ENCODE measurements at regions of chr7 and their contacts with region 1.

Region 1: GRCh38 chr7:95794917-95795515 is 22.7 kb downstream of the DYNC1I1 start:
- DNase-seq: peak; percentile 62
- ATAC-seq: peak; percentile 74
- H3K4me3 ChIP-seq: no peak overlapping the region
- H3K27ac ChIP-seq: no peak overlapping the region
- H3K4me1 ChIP-seq: no peaks in the 10 kb centered on the region
- H3K27me3 ChIP-seq: no peaks in the 10 kb centered on the region
- CTCF ChIP-seq: peak; percentile 76

Region 2: DNA sequence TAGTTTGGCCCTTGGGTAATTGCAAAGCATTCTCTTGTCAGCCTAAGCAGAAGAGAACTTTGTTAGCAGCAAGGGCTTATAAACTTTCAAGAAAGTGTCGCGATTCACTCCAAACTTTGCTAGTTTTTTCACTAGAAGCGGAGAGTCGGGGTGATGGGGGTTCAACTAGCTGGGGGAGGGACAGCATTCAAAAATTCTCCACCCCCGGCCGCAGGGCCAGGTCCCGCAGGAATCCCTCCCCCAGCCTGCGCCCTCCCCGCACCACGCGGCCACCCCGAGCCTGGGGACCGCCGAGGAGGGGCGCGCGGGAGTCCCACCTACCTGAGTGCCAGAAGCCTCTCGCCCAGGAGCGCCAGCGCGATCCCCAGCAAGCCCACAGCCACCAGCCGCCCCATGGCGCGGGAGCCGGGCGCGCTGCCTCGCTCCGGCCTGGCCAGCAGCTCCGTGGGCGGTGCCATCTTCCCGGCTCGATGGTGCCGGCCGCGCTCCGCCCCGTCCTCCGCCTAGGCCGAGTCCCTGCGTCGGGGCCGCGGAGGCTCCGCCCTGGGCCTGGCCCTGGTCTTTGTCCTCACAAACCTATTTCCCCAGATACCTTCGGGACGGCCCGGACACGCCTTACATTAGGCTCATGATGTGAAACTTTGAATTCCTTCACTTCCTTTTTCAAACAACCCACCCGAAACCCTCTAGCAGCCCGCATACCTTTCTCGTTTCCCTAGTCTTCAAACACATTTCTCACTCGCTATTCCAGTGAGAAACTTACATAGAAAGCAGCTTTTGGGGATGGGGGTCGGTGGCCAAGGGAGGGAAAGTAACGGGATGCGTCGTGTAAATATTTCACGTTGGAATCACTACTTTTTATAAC is 360.2 kb before region 1 on chr7 and contains the start of gene PON2:
- CTCF ChIA-PET with region 1: no interaction called
- POLR2A ChIA-PET with region 1: no interaction called
- intact Hi-C with region 1: no loop called
- DNase-seq: peak; percentile 85
- ATAC-seq: peak; percentile 99
- H3K4me3 ChIP-seq: peak within 1 kb of the TSS; percentile 90
- H3K27ac ChIP-seq: peak within 1 kb of the TSS; percentile 79
- H3K4me1 ChIP-seq: peaks cover 23% of the 10 kb centered on the region
- H3K27me3 ChIP-seq: no peaks in the 10 kb centered on the region
- CTCF ChIP-seq: no peak
- total RNA-seq, gene PON2: 51.6 and 56.4 TPM in 2 replicates

Region 3: DNA sequence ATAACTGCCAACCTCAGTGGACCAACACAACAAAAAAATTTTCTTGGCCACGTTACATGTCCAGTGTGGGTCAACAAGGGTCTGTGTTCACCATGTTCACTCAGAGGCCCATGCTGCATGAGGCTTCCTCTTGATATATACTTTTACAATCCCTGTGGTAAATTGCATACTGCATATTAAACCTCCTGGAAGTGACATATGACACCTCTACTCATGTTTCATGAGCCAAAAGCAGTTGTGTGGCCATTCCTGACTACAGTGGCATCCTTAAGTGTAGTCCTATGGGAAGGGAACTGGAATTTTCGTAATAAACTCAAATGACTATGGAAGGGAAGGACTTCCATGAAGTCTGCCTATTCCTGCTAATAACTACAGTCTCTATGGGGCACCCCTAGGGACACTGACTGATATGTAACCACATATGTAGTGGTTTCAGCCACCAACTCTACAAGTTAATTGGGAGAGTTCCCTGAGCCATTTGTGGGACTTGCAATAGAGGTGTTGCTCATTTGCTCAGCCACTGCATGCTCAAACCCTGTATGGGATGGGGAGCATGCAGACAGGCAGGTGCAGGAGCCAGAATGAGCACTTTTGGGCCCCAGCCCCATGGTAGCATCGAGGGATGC is 12.9 kb before region 1 on chr7:
- CTCF ChIA-PET with region 1: no interaction called
- POLR2A ChIA-PET with region 1: no interaction called
- intact Hi-C with region 1: no loop called
- DNase-seq: peak; percentile 44
- ATAC-seq: peak; percentile 85
- H3K4me3 ChIP-seq: no peak overlapping the region
- H3K27ac ChIP-seq: no peak overlapping the region
- H3K4me1 ChIP-seq: peaks cover 12% of the 10 kb centered on the region
- H3K27me3 ChIP-seq: no peaks in the 10 kb centered on the region
- CTCF ChIP-seq: no peak

Region 4: DNA sequence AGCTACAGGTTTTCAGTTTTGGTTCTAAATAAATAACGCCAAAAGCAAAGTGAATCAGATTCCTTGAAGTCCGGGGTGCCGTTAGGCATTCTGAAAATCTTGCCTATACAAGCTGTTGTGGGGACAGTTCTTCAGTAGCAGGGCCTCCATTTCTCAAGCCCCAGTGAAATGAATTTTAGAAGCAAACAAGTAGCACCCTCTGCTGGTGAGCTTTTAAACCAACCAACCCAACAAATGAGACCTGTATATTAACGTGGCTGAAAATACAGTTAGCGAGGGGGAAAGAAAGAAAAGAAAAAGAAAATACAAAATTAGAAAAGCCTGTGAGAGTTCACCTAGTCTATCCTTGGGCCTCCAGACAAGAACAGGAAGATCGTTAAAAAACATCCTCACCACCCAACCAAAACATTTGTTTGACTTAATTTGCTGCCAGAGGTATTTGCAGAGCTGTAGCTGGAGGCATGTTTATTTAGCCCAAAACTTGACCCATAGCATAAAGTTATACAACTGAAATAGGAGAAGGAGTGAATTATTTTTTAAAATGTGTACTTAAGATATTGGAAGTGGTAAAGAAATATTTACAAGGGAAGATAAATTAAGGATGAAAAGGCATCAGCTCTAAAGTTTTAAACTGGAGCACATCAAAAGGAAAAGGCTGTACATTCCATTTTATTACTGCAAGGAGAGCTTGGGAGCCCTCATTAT is 76.2 kb after region 1 on chr7:
- CTCF ChIA-PET with region 1: interaction called, 3 read pairs
- POLR2A ChIA-PET with region 1: no interaction called
- intact Hi-C with region 1: loop called (anchors 2 kb)
- DNase-seq: peak; percentile 63
- ATAC-seq: peak; percentile 75
- H3K4me3 ChIP-seq: no peak overlapping the region
- H3K27ac ChIP-seq: no peak overlapping the region
- H3K4me1 ChIP-seq: no peaks in the 10 kb centered on the region
- H3K27me3 ChIP-seq: no peaks in the 10 kb centered on the region
- CTCF ChIP-seq: peak; percentile 80

Region 5: DNA sequence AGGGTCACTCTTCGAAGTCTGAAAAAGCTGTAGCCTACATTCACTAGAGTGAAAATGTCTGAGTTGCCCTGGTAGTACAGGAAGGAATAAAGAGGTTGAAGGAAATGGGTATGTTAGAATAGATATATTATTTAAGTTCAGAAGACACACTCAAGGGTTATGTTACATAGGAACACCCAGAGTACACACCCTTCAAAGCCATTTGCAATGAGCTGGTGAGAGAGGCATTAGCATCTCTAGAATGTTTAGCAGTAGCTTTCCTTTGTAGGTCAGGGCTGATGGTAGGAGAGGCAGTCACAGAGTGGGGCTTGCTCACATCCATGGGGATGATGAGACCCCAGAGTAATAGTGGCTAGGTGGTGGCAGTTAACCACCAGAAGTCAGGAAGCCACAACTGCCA is 305.7 kb after region 1 on chr7:
- CTCF ChIA-PET with region 1: no interaction called
- POLR2A ChIA-PET with region 1: no interaction called
- intact Hi-C with region 1: no loop called
- DNase-seq: no peak
- ATAC-seq: no peak
- H3K4me3 ChIP-seq: no peak overlapping the region
- H3K27ac ChIP-seq: no peak overlapping the region
- H3K4me1 ChIP-seq: no peaks in the 10 kb centered on the region
- H3K27me3 ChIP-seq: no peaks in the 10 kb centered on the region
- CTCF ChIP-seq: no peak

Region 6: DNA sequence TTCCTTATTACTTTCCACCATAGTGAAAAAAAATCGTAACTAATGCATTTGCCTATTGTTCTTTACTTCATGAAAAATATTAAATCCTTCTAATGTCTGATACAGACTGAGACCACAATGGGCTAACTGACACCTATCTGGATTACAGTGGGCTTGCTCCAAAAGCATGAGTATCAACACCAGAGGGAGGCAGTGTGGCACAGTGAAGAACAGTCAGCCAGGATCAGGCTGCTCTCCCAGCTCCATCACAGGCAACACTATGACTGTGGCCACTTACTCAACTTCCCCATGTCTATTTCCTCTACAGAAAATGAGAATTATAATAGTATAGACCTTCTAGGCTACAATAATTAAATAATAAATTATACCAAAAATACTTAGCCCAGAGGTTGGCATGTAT is 429.7 kb after region 1 on chr7:
- CTCF ChIA-PET with region 1: no interaction called
- POLR2A ChIA-PET with region 1: no interaction called
- intact Hi-C with region 1: loop called (anchors 5 kb)
- DNase-seq: peak; percentile 15
- ATAC-seq: no peak; the same call in 1 of the 2 replicates
- H3K4me3 ChIP-seq: no peak overlapping the region
- H3K27ac ChIP-seq: no peak overlapping the region
- H3K4me1 ChIP-seq: peaks cover 13% of the 10 kb centered on the region
- H3K27me3 ChIP-seq: no peaks in the 10 kb centered on the region
- CTCF ChIP-seq: peak; percentile 37; the same call in 1 of the 2 replicates